B cell (primary cell): ENCODE measurements at regions of chr5 and their contacts with region 1.

Region 1: GRCh38 chr5:103475629-103476240 is 86.9 kb downstream of the NUDT12 start:
- DNase-seq: peak; percentile 33
- ATAC-seq: no peak
- H3K4me3 ChIP-seq: no peak overlapping the region
- H3K4me3 Mint-ChIP-seq: no peak overlapping the region
- H3K27ac ChIP-seq: no peak overlapping the region
- H3K27ac Mint-ChIP-seq: no peak overlapping the region
- H3K4me1 ChIP-seq: no peaks in the 10 kb centered on the region
- H3K4me1 Mint-ChIP-seq: no peaks in the 10 kb centered on the region
- H3K27me3 ChIP-seq: no peaks in the 10 kb centered on the region
- H3K27me3 Mint-ChIP-seq: peaks cover 4% of the 10 kb centered on the region
- CTCF ChIP-seq: peak; percentile 70

Region 2: GRCh38 chr5:103232393-103232999 is 243.2 kb before region 1 on chr5:
- CTCF ChIA-PET with region 1: interaction called, 34 read pairs
- POLR2A ChIA-PET with region 1: no interaction called
- intact Hi-C with region 1: no loop called
- DNase-seq: peak; percentile 36
- ATAC-seq: peak; percentile 43
- H3K4me3 ChIP-seq: no peak overlapping the region
- H3K4me3 Mint-ChIP-seq: no peak overlapping the region
- H3K27ac ChIP-seq: no peak overlapping the region
- H3K27ac Mint-ChIP-seq: no peak overlapping the region
- H3K4me1 ChIP-seq: no peaks in the 10 kb centered on the region
- H3K4me1 Mint-ChIP-seq: no peaks in the 10 kb centered on the region
- H3K27me3 ChIP-seq: no peaks in the 10 kb centered on the region
- H3K27me3 Mint-ChIP-seq: peaks cover 8% of the 10 kb centered on the region
- CTCF ChIP-seq: peak; percentile 80

Region 3: GRCh38 chr5:103450333-103451061 is 25.2 kb before region 1 on chr5:
- CTCF ChIA-PET with region 1: no interaction called
- POLR2A ChIA-PET with region 1: no interaction called
- intact Hi-C with region 1: no loop called
- DNase-seq: no peak
- ATAC-seq: no peak
- H3K4me3 ChIP-seq: no peak overlapping the region
- H3K4me3 Mint-ChIP-seq: no peak overlapping the region
- H3K27ac ChIP-seq: no peak overlapping the region
- H3K27ac Mint-ChIP-seq: no peak overlapping the region
- H3K4me1 ChIP-seq: no peaks in the 10 kb centered on the region
- H3K4me1 Mint-ChIP-seq: no peaks in the 10 kb centered on the region
- H3K27me3 ChIP-seq: no peaks in the 10 kb centered on the region
- H3K27me3 Mint-ChIP-seq: no peaks in the 10 kb centered on the region
- CTCF ChIP-seq: no peak